CD8-positive, alpha-beta T cell (primary cell): ENCODE measurements at regions of chr6 and their contacts with region 1.

Region 1: DNA sequence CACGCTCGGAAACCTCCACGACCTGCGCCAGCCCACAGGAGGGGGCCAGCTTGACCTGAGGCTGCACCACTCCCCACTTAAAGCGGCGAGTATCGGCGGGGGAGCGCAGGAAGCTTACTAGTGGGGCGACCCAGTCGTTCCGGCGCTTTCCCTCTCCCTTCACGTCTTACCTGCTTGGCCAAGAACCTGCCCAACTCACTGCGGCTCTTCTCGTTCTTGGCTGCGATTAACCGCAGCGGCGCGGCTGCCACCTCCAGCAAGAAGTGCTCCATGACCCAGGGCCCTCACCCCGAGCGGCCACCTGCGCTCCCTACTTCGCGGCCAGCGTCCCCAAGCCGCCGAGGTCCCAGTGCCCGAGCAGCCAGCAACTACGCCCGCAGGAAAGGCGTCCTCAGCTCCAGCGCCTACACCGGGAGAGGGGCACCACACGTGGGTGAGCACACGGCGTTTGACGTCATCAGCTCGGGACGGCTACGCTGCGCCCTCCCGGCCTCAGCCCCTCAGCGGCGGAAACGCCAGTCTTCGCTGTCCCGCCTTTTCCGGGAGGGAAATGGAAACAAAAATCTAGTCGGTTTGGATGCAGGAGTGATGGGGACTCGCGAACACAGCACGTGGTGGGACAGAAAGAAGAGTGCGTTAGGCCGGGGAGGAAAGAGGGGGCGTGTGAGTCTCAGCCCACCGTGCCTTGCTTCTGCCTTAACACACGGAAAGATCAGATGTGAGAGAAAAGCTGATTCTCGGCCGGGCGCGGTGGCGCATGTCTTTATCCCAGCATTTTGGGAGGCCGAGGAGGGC is at the start of gene MDN1:
- DNase-seq: peak; percentile 70 to 97 (median 88)
- ATAC-seq: peak; percentile 92
- H3K4me3 ChIP-seq: peak within 1 kb of the TSS; percentile 85 to 90
- H3K4me3 Mint-ChIP-seq: peak within 1 kb of the TSS; percentile 98
- H3K27ac ChIP-seq: peak within 1 kb of the TSS; percentile 73 to 76
- H3K27ac Mint-ChIP-seq: peak within 1 kb of the TSS; percentile 97
- H3K4me1 ChIP-seq: peaks cover 29% of the 10 kb centered on the region
- H3K4me1 Mint-ChIP-seq: peaks cover 34% of the 10 kb centered on the region
- H3K27me3 ChIP-seq: no peaks in the 10 kb centered on the region
- H3K27me3 Mint-ChIP-seq: no peaks in the 10 kb centered on the region
- CTCF ChIP-seq: no peak
- total RNA-seq, gene MDN1: 39.5 to 43.2 TPM

Region 2: DNA sequence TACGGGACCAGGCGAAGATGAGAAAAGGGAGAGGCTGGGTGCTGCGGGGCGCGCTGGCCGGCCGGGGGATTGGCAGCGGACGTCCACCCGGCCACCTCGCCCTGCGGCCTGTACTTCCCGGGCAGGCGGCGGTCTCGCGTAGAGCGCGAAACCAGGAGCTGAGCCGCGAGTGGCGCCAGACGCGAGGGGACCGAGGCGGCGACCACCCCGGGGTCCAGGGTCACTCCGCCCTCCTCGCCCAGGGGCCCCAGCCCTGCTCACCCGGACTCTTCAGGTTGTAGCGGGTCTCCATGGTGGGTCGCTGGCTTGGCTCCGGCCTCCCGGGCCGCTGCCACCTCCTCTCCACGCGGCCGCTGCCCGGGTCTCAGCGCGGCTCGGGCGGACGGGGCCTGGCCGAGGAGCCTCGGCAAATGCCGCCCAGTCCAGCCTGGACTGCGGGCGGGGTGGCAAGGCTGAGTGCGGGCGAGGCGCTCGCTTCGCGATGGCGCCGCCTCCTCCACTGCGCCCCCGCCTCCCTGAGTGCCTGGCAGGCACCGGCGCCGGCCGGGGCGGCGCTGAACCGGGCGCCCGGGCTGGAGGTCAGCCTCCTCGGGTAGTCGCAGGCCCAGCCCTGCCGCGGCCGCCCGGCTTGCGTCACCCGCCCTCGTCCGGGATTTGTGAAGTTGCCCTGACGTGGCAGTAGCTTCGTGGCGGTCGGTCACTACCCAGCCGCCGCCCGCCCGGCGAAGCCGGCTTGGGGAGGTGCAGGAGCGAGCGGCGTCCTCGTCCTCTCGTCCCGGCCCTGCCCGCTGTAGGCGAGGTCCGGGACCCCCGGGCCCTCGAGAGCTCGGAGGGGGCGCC is 467.0 kb before region 1 on chr6 and contains the start of gene UBE2J1:
- CTCF ChIA-PET with region 1: no interaction called
- POLR2A ChIA-PET with region 1: no interaction called
- intact Hi-C with region 1: loop called (anchors 5 to 10 kb)
- DNase-seq: peak; percentile 48 to 87 (median 71)
- ATAC-seq: peak; percentile 81
- H3K4me3 ChIP-seq: peak within 1 kb of the TSS; percentile 58 to 67
- H3K4me3 Mint-ChIP-seq: peak within 1 kb of the TSS; percentile 97
- H3K27ac ChIP-seq: peak within 1 kb of the TSS; percentile 74 to 77
- H3K27ac Mint-ChIP-seq: peak within 1 kb of the TSS; percentile 97
- H3K4me1 ChIP-seq: peaks cover 42% of the 10 kb centered on the region
- H3K4me1 Mint-ChIP-seq: peaks cover 69% of the 10 kb centered on the region
- H3K27me3 ChIP-seq: no peaks in the 10 kb centered on the region
- H3K27me3 Mint-ChIP-seq: no peaks in the 10 kb centered on the region
- CTCF ChIP-seq: no peak
- total RNA-seq, gene UBE2J1: 34.1 to 37.5 TPM

Region 3: DNA sequence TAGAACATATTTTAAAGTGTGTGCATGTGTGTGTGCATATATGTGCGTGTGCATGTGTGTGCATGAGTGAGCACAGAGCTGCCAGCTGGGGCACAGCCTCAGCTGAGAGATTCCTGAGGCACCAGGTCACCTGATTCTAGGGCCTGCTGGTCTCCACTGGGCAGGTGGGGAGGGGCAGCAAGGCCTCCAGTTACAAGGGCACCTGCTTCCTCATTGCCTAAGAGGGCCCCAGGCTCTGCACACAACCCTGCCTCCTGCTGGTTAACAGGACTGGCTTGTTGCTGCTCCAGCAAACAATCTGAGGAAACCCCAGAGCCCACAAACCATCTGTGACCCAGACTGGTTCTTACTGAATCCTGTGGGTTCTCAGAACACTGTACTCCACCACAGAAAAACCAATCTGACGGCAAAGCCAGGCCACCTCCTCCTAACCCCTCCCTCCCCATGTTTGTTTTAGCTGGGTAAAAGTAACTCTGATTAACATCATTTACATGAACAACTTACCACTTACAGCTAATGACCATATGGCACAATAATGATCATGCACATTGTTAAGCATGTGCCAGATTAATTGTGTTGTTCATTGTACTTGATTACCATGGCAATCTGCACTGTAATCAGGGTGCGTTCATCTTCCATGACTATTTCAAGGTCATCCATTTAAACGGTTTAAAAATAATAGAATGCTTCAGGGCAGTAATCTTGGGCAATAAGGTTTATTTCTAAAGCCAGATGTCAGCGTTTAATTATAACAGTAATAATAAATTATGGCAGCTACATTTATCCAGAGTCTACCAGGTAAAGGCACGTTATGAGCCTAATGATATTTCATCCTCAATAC is 443.9 kb before region 1 on chr6:
- CTCF ChIA-PET with region 1: no interaction called
- POLR2A ChIA-PET with region 1: no interaction called
- intact Hi-C with region 1: no loop called
- DNase-seq: peak; percentile 49 to 94 (median 72)
- ATAC-seq: peak; percentile 89
- H3K4me3 ChIP-seq: no peak overlapping the region
- H3K4me3 Mint-ChIP-seq: no peak overlapping the region
- H3K27ac ChIP-seq: no peak overlapping the region
- H3K27ac Mint-ChIP-seq: peak overlapping the region; percentile 57
- H3K4me1 ChIP-seq: peaks cover 21% of the 10 kb centered on the region
- H3K4me1 Mint-ChIP-seq: peaks cover 28% of the 10 kb centered on the region
- H3K27me3 ChIP-seq: peaks cover 0 to 2% of the 10 kb centered on the region in 2 experiments
- H3K27me3 Mint-ChIP-seq: no peaks in the 10 kb centered on the region
- CTCF ChIP-seq: peak; percentile 39

Region 4: GRCh38 chr6:89542081-89542857 is 277.3 kb before region 1 on chr6:
- CTCF ChIA-PET with region 1: no interaction called
- POLR2A ChIA-PET with region 1: no interaction called
- intact Hi-C with region 1: no loop called
- DNase-seq: no peak
- ATAC-seq: no peak
- H3K4me3 ChIP-seq: no peak overlapping the region
- H3K4me3 Mint-ChIP-seq: no peak overlapping the region
- H3K27ac ChIP-seq: no peak overlapping the region
- H3K27ac Mint-ChIP-seq: no peak overlapping the region
- H3K4me1 ChIP-seq: no peaks in the 10 kb centered on the region
- H3K4me1 Mint-ChIP-seq: no peaks in the 10 kb centered on the region
- H3K27me3 ChIP-seq: no peaks in the 10 kb centered on the region
- H3K27me3 Mint-ChIP-seq: no peaks in the 10 kb centered on the region
- CTCF ChIP-seq: no peak

Region 5: GRCh38 chr6:89638320-89639195 is 181.0 kb before region 1 on chr6 and contains the start of gene LYRM2:
- CTCF ChIA-PET with region 1: no interaction called
- POLR2A ChIA-PET with region 1: no interaction called
- intact Hi-C with region 1: loop called (anchors 1 to 5 kb)
- DNase-seq: peak; percentile 83 to 95 (median 89)
- ATAC-seq: peak; percentile 95
- H3K4me3 ChIP-seq: peak within 1 kb of the TSS; percentile 84 to 90
- H3K4me3 Mint-ChIP-seq: peak within 1 kb of the TSS; percentile 99
- H3K27ac ChIP-seq: peak within 1 kb of the TSS; percentile 91 to 98
- H3K27ac Mint-ChIP-seq: peak within 1 kb of the TSS; percentile 99
- H3K4me1 ChIP-seq: peaks cover 15% of the 10 kb centered on the region
- H3K4me1 Mint-ChIP-seq: peaks cover 34% of the 10 kb centered on the region
- H3K27me3 ChIP-seq: no peaks in the 10 kb centered on the region
- H3K27me3 Mint-ChIP-seq: no peaks in the 10 kb centered on the region
- CTCF ChIP-seq: no peak
- total RNA-seq, gene LYRM2: 16.7 to 17.8 TPM

Region 6: DNA sequence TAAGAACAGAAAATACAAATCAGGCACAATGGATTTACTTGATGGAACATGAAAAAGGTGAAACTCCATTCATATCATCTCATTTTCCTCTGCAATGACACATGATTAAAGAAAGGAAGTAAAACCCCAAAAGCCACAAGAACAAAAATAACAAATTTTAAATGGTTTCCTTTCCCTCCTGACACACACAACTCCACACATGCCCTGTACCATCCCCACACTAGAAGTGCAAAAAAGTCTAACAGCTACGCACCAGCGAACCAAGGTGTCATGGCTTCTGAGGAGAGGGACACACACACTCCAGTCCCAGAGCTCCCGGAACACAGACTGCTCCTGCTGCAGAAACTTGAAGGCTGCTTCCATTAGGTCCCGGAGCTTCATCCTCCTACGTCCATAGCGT is 25.2 kb before region 1 on chr6:
- CTCF ChIA-PET with region 1: interaction called, 5 read pairs
- POLR2A ChIA-PET with region 1: interaction called, 3 read pairs
- intact Hi-C with region 1: loop called in 1 of 2 experiments (anchors 2 kb)
- DNase-seq: peak in 4 of 9 experiments; percentile 3 to 50 (median 28)
- ATAC-seq: peak; percentile 69
- H3K4me3 ChIP-seq: no peak overlapping the region
- H3K4me3 Mint-ChIP-seq: peak overlapping the region; percentile 76
- H3K27ac ChIP-seq: peak overlapping the region in 1 of 2 experiments; percentile 25
- H3K27ac Mint-ChIP-seq: peak overlapping the region; percentile 78
- H3K4me1 ChIP-seq: peaks cover 27% of the 10 kb centered on the region
- H3K4me1 Mint-ChIP-seq: peaks cover 27% of the 10 kb centered on the region
- H3K27me3 ChIP-seq: no peaks in the 10 kb centered on the region
- H3K27me3 Mint-ChIP-seq: no peaks in the 10 kb centered on the region
- CTCF ChIP-seq: no peak

Region 7: GRCh38 chr6:89829591-89830385 is 10.3 kb after region 1 on chr6 and contains the start of gene CASP8AP2:
- CTCF ChIA-PET with region 1: interaction called, 19 read pairs
- POLR2A ChIA-PET with region 1: interaction called, 55 read pairs
- intact Hi-C with region 1: loop called (anchors 1 kb)
- DNase-seq: peak; percentile 88 to 99 (median 93)
- ATAC-seq: peak; percentile 94
- H3K4me3 ChIP-seq: peak within 1 kb of the TSS; percentile 82 to 95
- H3K4me3 Mint-ChIP-seq: peak within 1 kb of the TSS; percentile 99
- H3K27ac ChIP-seq: peak within 1 kb of the TSS; percentile 71 to 84
- H3K27ac Mint-ChIP-seq: peak within 1 kb of the TSS; percentile 97
- H3K4me1 ChIP-seq: peaks cover 14% of the 10 kb centered on the region
- H3K4me1 Mint-ChIP-seq: peaks cover 35% of the 10 kb centered on the region
- H3K27me3 ChIP-seq: no peaks in the 10 kb centered on the region
- H3K27me3 Mint-ChIP-seq: no peaks in the 10 kb centered on the region
- CTCF ChIP-seq: no peak
- total RNA-seq, gene CASP8AP2: 13.1 to 14.8 TPM

Region 8: GRCh38 chr6:89834884-89835792 is 15.6 kb after region 1 on chr6:
- CTCF ChIA-PET with region 1: interaction called, 4 read pairs
- POLR2A ChIA-PET with region 1: interaction called, 55 read pairs
- intact Hi-C with region 1: loop called (anchors 2 kb)
- DNase-seq: peak in 7 of 9 experiments; percentile 33 to 72 (median 41)
- ATAC-seq: peak; percentile 82
- H3K4me3 ChIP-seq: peak overlapping the region in 1 of 2 experiments; percentile 11
- H3K4me3 Mint-ChIP-seq: peak overlapping the region; percentile 70
- H3K27ac ChIP-seq: peak overlapping the region; percentile 28 to 72
- H3K27ac Mint-ChIP-seq: peak overlapping the region; percentile 84
- H3K4me1 ChIP-seq: peaks cover 30% of the 10 kb centered on the region
- H3K4me1 Mint-ChIP-seq: peaks cover 59% of the 10 kb centered on the region
- H3K27me3 ChIP-seq: no peaks in the 10 kb centered on the region
- H3K27me3 Mint-ChIP-seq: no peaks in the 10 kb centered on the region
- CTCF ChIP-seq: no peak